ENCODE measurements at regions of chr4 and their contacts with region 1.

Region 1: DNA sequence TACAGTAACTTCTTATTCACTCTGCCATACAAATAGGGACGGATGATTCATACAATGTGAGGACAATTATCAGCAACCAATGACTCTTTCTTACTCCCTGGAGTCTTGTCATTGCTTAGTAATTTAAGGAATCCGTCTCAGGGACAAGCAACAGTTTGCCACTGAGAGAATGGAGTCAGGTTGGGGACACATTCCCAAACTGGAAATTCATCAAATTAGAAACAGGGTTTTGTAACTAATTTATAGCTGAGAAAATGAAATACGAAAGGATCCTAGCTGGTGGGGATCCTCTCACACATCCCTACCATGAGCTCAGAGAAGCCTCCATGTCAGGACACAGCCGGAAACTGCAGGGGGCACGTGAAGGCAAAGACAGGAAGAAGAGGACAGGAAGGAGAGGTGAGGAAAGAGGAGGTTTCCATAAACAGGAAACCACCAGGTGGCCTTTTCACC is 50.4 kb upstream of the KDR start:
- DNase-seq: no peak
- ATAC-seq: no peak
- H3K4me3 ChIP-seq: no peak overlapping the region
- H3K27ac ChIP-seq: no peak overlapping the region
- H3K4me1 ChIP-seq: no peaks in the 10 kb centered on the region
- H3K27me3 ChIP-seq: no peaks in the 10 kb centered on the region

Region 2: GRCh38 chr4:54823616-54824015 is 352.2 kb before region 1 on chr4:
- intact Hi-C with region 1: no loop called
- DNase-seq: no peak
- ATAC-seq: no peak
- H3K4me3 ChIP-seq: no peak overlapping the region
- H3K27ac ChIP-seq: no peak overlapping the region
- H3K4me1 ChIP-seq: no peaks in the 10 kb centered on the region
- H3K27me3 ChIP-seq: no peaks in the 10 kb centered on the region

Region 3: GRCh38 chr4:54945838-54946237 is 230.0 kb before region 1 on chr4:
- intact Hi-C with region 1: no loop called
- DNase-seq: no peak
- ATAC-seq: peak; percentile 62 to 78
- H3K4me3 ChIP-seq: no peak overlapping the region
- H3K27ac ChIP-seq: no peak overlapping the region
- H3K4me1 ChIP-seq: no peaks in the 10 kb centered on the region
- H3K27me3 ChIP-seq: no peaks in the 10 kb centered on the region

Region 4: DNA sequence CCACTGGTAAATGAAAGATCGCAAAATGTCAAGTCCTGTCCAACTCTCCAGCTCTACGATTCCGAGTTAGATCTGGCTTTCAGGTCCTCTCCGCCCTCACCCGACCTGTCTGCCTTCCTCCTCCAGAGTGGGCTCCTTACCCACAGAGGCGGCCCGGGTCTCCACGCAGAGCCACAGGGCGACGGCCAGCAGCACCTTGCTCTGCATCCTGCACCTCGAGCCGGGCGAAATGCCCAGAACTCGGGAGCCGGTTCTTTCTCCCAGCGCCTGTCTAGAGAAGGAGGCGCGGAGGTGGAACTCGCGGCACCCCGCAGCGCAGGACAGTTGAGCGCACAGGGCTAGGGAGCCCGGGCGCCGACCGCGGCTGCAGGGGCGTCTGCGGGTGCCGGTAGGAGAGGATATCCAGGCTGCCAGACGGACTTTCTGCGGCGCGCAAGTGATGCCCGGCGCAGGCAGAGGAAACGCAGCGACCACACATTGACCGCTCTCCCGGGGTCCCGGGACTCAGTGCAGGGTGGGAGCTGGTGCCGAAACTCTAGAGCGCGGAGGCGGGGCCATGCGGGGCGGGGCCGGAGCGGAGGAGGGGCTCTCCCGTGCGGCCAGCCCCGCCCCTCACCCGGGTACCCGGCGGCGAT is 50.6 kb before region 1 on chr4 and contains the start of gene KDR:
- intact Hi-C with region 1: loop called in 1 of 4 experiments (anchors 10 kb)
- DNase-seq: peak; percentile 43 to 85 (median 77)
- ATAC-seq: peak; percentile 96
- H3K4me3 ChIP-seq: peak within 1 kb of the TSS; percentile 82
- H3K27ac ChIP-seq: peak within 1 kb of the TSS; percentile 91
- H3K4me1 ChIP-seq: no peaks in the 10 kb centered on the region
- H3K27me3 ChIP-seq: no peaks in the 10 kb centered on the region
- total RNA-seq, gene KDR: 13.6 to 20.9 (median 17.2) TPM

Measured in right cardiac atrium (tissue), 5 donors.